ENCODE measurements at regions of chr21 and their contacts with region 1.

Region 1: DNA sequence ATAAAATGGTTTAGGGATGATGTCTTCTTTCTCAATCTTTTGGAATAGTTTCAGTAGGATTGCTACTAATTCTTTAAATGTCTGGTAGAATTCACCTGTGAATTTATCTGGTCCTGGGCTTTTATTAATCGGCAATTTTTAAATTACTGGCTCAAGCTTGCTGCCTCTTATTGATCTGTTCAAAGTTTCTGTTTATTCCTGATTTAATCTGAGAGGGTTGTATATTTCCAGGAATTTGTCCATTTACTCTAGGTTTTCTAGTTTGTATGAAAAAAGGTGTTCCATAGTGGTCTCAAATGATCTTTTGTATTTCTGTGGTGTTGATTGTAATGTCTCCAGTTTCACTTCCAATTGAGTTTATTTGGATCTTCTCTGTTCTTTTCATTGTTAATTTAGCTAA is 617.8 kb downstream of the LTN1 start:
- DNase-seq: no peak
- ATAC-seq: no peak
- H3K4me3 ChIP-seq: no peak overlapping the region
- H3K4me3 Mint-ChIP-seq: no peak overlapping the region
- H3K27ac ChIP-seq: no peak overlapping the region
- H3K27ac Mint-ChIP-seq: no peak overlapping the region
- H3K4me1 ChIP-seq: no peaks in the 10 kb centered on the region
- H3K4me1 Mint-ChIP-seq: no peaks in the 10 kb centered on the region
- H3K27me3 ChIP-seq: no peaks in the 10 kb centered on the region
- H3K27me3 Mint-ChIP-seq: no peaks in the 10 kb centered on the region

Region 2: GRCh38 chr21:26982767-26983166 is 1392.1 kb before region 1 on chr21:
- CTCF ChIA-PET with region 1: no interaction called
- POLR2A ChIA-PET with region 1: interaction called in 1 of 2 experiments, 12 read pairs
- DNase-seq: no peak
- ATAC-seq: no peak
- H3K4me3 ChIP-seq: no peak overlapping the region
- H3K4me3 Mint-ChIP-seq: no peak overlapping the region
- H3K27ac ChIP-seq: no peak overlapping the region
- H3K27ac Mint-ChIP-seq: no peak overlapping the region
- H3K4me1 ChIP-seq: no peaks in the 10 kb centered on the region
- H3K4me1 Mint-ChIP-seq: no peaks in the 10 kb centered on the region
- H3K27me3 ChIP-seq: no peaks in the 10 kb centered on the region
- H3K27me3 Mint-ChIP-seq: no peaks in the 10 kb centered on the region